HEK293 (cell line): ENCODE measurements at regions of chr1 and their contacts with region 1.

Region 1: GRCh38 chr1:168342572-168343280 is 62.0 kb downstream of the TBX19 start:
- H3K4me3 ChIP-seq: no peak overlapping the region
- H3K27ac ChIP-seq: no peak overlapping the region
- H3K4me1 ChIP-seq: no peaks in the 10 kb centered on the region
- CTCF ChIP-seq: peak; percentile 72

Region 2: GRCh38 chr1:168273575-168273974 is 69.2 kb before region 1 on chr1:
- CTCF ChIA-PET with region 1: no interaction called
- POLR2A ChIA-PET with region 1: no interaction called
- H3K4me3 ChIP-seq: no peak overlapping the region
- H3K27ac ChIP-seq: no peak overlapping the region
- H3K4me1 ChIP-seq: no peaks in the 10 kb centered on the region
- CTCF ChIP-seq: no peak

Region 3: DNA sequence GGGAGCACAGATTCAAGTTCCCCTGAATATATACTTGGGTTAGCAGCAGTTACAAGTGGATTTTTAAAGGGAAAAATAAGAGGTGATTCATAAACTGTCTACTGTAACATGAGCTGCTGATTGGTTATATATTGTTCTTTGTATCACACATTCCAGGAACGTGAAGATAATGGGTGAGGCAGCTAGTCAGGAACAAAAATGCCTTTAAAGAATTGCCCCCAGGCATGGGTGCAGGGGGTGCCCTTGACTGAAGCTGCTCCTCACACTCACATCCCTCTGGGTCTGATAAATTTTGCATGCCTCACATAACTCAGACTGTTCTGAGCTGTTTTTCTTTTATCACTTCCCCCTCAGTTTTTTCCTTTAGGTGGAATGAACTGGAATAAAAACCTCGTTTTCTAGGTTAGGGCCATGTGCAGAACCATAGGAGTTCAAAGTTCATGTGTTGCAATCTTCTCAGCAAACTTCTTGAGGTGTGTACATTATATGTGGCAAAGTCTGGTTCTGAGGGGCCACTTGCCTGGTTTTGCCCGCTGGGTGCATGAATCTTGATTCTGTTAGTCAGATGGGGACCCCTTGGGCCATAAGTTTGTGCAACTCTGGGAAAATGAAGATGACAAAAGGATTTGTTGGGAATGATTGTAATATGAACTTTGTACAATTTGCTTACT is 40.9 kb before region 1 on chr1:
- CTCF ChIA-PET with region 1: interaction called, 14 read pairs
- POLR2A ChIA-PET with region 1: no interaction called
- H3K4me3 ChIP-seq: no peak overlapping the region
- H3K27ac ChIP-seq: no peak overlapping the region
- H3K4me1 ChIP-seq: no peaks in the 10 kb centered on the region
- CTCF ChIP-seq: no peak

Region 4: GRCh38 chr1:168328731-168329399 is 13.9 kb before region 1 on chr1:
- CTCF ChIA-PET with region 1: interaction called, 33 read pairs
- POLR2A ChIA-PET with region 1: no interaction called
- H3K4me3 ChIP-seq: no peak overlapping the region
- H3K27ac ChIP-seq: no peak overlapping the region
- H3K4me1 ChIP-seq: no peaks in the 10 kb centered on the region
- CTCF ChIP-seq: no peak

Region 5: GRCh38 chr1:168372861-168373371 is 30.2 kb after region 1 on chr1:
- CTCF ChIA-PET with region 1: interaction called, 12 read pairs
- POLR2A ChIA-PET with region 1: no interaction called
- H3K4me3 ChIP-seq: no peak overlapping the region
- H3K27ac ChIP-seq: no peak overlapping the region
- H3K4me1 ChIP-seq: no peaks in the 10 kb centered on the region
- CTCF ChIP-seq: no peak

Region 6: GRCh38 chr1:168421399-168422004 is 78.8 kb after region 1 on chr1:
- CTCF ChIA-PET with region 1: interaction called, 14 read pairs
- POLR2A ChIA-PET with region 1: no interaction called
- H3K4me3 ChIP-seq: no peak overlapping the region
- H3K27ac ChIP-seq: no peak overlapping the region
- H3K4me1 ChIP-seq: no peaks in the 10 kb centered on the region
- CTCF ChIP-seq: no peak

Region 7: DNA sequence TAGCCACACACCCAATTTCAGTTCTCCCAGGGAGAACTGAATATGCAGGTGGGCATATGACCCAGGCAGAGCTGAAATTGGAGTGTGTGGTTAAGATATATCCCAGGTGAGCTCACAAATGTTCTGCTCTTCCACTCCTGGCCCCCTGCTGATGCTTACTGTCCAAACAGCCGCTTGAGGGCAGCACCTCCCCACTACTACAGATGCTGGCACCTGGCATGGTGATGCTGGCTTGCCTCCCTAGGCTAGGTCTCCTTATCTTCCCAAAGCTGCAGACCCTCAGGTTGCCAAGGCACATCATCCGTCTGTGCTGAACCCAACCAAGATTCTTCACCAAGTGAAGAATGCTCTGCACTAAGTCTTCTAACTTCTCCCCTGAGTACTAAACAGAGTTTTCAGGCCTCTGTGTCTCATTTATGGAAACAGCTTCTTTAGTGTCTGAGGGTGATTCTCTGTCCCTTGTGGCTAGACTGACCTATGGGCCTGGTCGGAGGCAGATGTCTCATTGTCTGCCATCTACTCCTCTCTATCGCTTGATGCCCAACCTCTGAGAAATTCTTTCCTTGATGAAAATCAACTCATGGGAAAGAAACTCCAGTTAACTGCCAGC is 260.9 kb after region 1 on chr1:
- CTCF ChIA-PET with region 1: interaction called, 22 read pairs
- POLR2A ChIA-PET with region 1: no interaction called
- H3K4me3 ChIP-seq: no peak overlapping the region
- H3K27ac ChIP-seq: no peak overlapping the region
- H3K4me1 ChIP-seq: no peaks in the 10 kb centered on the region
- CTCF ChIP-seq: peak; percentile 86